ENCODE measurements at regions of chr20 and their contacts with region 1.

Region 1: DNA sequence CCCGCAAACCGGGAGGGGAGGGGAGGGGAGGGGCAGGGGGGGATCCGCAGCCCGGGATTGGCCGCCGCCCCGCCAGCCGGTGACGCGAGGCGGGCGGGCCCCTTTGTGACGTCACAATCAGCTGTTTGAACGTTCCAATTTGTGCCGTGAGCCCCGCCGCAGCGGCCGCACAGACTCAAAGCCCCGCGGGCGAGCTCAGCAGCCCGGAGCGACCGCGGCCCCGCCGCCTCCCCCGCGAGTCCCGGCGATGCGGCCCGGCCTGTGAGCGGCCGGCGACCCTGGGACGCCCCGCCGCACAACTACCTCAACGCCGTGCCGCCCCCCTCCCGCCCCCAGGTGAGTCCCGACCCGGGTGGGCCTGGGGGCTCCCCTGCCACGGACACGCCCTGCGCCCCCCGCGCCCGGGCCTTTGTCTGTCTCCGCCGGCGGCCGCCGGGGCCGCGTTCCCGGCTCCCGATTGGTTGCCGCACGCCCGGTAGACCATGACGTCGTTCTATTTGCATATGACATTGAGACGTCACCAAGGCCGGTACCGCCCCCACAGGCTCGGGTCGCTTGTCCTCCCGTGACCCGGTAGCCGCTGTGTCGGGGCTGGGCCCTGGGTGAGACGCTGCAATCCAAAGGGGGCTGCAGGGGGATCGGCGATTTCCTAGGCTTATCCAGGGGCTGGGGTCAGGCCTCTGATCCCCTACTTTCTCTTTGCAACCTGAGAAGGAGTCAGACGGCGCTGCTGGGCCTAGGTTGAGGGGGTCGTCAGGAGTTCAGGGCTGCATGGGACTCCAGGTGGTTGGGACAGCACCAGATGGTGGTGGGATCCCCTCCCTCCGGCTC is at the start of gene TP53INP2:
- DNase-seq: no peak
- ATAC-seq: peak; percentile 66
- H3K4me3 ChIP-seq: peak within 1 kb of the TSS; percentile 96
- H3K27ac ChIP-seq: peak within 1 kb of the TSS; percentile 70
- H3K4me1 ChIP-seq: peaks cover 3% of the 10 kb centered on the region; the same call in 1 of the 2 replicates
- H3K27me3 ChIP-seq: no peaks in the 10 kb centered on the region
- CTCF ChIP-seq: no peak
- EP300 ChIP-seq: no peak
- POLR2A ChIP-seq: peak; percentile 66
- RAD21 ChIP-seq: no peak
- polyA plus RNA-seq, gene TP53INP2: 2.8 to 3.7 TPM

Region 2: GRCh38 chr20:34538671-34539123 is 165.7 kb before region 1 on chr20:
- CTCF ChIA-PET with region 1: interaction called, 68 read pairs
- POLR2A ChIA-PET with region 1: no interaction called
- RAD21 ChIA-PET with region 1: interaction called, 9 read pairs
- SMC1A ChIA-PET with region 1: interaction called, 50 read pairs
- in situ Hi-C with region 1: no loop called
- intact Hi-C with region 1: loop called (anchors 1 kb)
- DNase-seq: no peak
- ATAC-seq: peak; percentile 85
- H3K4me3 ChIP-seq: no peak overlapping the region
- H3K27ac ChIP-seq: no peak overlapping the region
- H3K4me1 ChIP-seq: peaks cover 4% of the 10 kb centered on the region; the same call in 1 of the 2 replicates
- H3K27me3 ChIP-seq: no peaks in the 10 kb centered on the region
- CTCF ChIP-seq: peak; percentile 78 to 92 (median 88)
- EP300 ChIP-seq: no peak
- POLR2A ChIP-seq: no peak
- RAD21 ChIP-seq: peak; percentile 69

Region 3: GRCh38 chr20:34544109-34544793 is 160.1 kb before region 1 on chr20:
- CTCF ChIA-PET with region 1: interaction called, 68 read pairs
- POLR2A ChIA-PET with region 1: no interaction called
- RAD21 ChIA-PET with region 1: interaction called, 9 read pairs
- SMC1A ChIA-PET with region 1: interaction called, 50 read pairs
- in situ Hi-C with region 1: no loop called
- intact Hi-C with region 1: no loop called
- DNase-seq: no peak
- ATAC-seq: no peak
- H3K4me3 ChIP-seq: no peak overlapping the region
- H3K27ac ChIP-seq: no peak overlapping the region
- H3K4me1 ChIP-seq: peaks cover 4% of the 10 kb centered on the region; the same call in 1 of the 2 replicates
- H3K27me3 ChIP-seq: no peaks in the 10 kb centered on the region
- CTCF ChIP-seq: no peak
- EP300 ChIP-seq: no peak
- POLR2A ChIP-seq: no peak
- RAD21 ChIP-seq: no peak

Region 4: DNA sequence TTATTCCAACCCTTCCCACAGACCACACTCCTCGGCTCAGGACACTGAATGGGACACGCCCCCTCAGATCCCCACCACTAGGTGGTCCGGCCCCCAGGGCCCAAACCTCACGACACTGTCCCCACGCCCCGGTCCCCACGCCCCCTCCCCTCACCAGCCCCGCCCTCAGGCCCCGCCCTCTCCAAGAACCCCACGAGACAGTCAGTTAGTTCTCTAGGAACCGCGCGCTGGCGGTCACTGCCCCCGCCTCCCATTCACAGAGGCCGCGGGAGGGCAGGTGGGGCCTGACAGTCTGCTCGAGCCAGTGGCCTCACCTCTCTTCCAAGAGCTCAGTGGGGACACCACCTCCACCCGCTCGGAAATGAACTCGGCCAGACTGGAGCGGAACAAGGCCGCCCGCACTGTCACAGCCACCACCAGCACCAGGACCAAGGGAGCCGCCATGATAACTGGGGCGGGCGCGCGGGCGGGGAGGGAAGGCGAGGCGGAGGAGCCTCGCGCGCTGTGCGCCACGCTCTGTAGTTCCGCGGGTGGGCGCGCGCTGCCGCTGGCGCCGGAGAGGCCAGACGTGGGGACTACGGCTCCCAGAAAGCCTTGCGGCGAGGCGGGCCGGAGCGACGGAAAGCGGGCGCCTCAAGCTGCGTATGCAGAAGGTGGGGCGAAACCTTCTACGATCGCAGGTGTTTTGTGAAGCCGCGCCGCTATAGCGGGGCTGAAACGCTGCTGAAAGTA is 27.6 kb before region 1 on chr20 and contains the start of gene PIGU:
- CTCF ChIA-PET with region 1: interaction called, 3 read pairs
- POLR2A ChIA-PET with region 1: interaction called, 3 read pairs
- RAD21 ChIA-PET with region 1: interaction called, 12 read pairs
- SMC1A ChIA-PET with region 1: interaction called, 4 read pairs
- in situ Hi-C with region 1: no loop called
- intact Hi-C with region 1: no loop called
- DNase-seq: peak; percentile 88
- ATAC-seq: peak; percentile 98
- H3K4me3 ChIP-seq: peak within 1 kb of the TSS; percentile 95
- H3K27ac ChIP-seq: peak within 1 kb of the TSS; percentile 76
- H3K4me1 ChIP-seq: no peaks in the 10 kb centered on the region; the same call in 1 of the 2 replicates
- H3K27me3 ChIP-seq: no peaks in the 10 kb centered on the region
- CTCF ChIP-seq: peak in 1 of 3 experiments; percentile 14; a peak in 1 of 6 replicates
- EP300 ChIP-seq: no peak
- POLR2A ChIP-seq: peak; percentile 88
- RAD21 ChIP-seq: no peak
- polyA plus RNA-seq, gene PIGU: 4.1 to 6.3 TPM

Region 5: GRCh38 chr20:34720266-34720665 is 15.9 kb after region 1 on chr20:
- CTCF ChIA-PET with region 1: interaction called, 31 read pairs
- POLR2A ChIA-PET with region 1: interaction called, 14 read pairs
- RAD21 ChIA-PET with region 1: interaction called, 19 read pairs
- SMC1A ChIA-PET with region 1: interaction called, 18 read pairs
- in situ Hi-C with region 1: no loop called
- intact Hi-C with region 1: no loop called
- DNase-seq: no peak
- ATAC-seq: peak; percentile 49
- H3K4me3 ChIP-seq: no peak overlapping the region; the same call in 1 of the 2 replicates
- H3K27ac ChIP-seq: peak overlapping the region; percentile 79
- H3K4me1 ChIP-seq: peaks cover 37% of the 10 kb centered on the region
- H3K27me3 ChIP-seq: no peaks in the 10 kb centered on the region
- CTCF ChIP-seq: no peak
- EP300 ChIP-seq: no peak
- POLR2A ChIP-seq: no peak
- RAD21 ChIP-seq: no peak

Region 6: GRCh38 chr20:34747479-34747878 is 43.1 kb after region 1 on chr20:
- CTCF ChIA-PET with region 1: interaction called, 10 read pairs
- POLR2A ChIA-PET with region 1: interaction called, 3 read pairs
- RAD21 ChIA-PET with region 1: interaction called, 17 read pairs
- SMC1A ChIA-PET with region 1: interaction called, 8 read pairs
- in situ Hi-C with region 1: no loop called
- intact Hi-C with region 1: no loop called
- DNase-seq: no peak
- ATAC-seq: peak; percentile 69
- H3K4me3 ChIP-seq: 0 out of 2 replicates have a peak overlapping the region, but pooled peaks have one; percentile 8
- H3K27ac ChIP-seq: peak overlapping the region; percentile 80
- H3K4me1 ChIP-seq: peaks cover 11% of the 10 kb centered on the region
- H3K27me3 ChIP-seq: no peaks in the 10 kb centered on the region
- CTCF ChIP-seq: no peak
- EP300 ChIP-seq: no peak
- POLR2A ChIP-seq: no peak
- RAD21 ChIP-seq: no peak

Region 7: DNA sequence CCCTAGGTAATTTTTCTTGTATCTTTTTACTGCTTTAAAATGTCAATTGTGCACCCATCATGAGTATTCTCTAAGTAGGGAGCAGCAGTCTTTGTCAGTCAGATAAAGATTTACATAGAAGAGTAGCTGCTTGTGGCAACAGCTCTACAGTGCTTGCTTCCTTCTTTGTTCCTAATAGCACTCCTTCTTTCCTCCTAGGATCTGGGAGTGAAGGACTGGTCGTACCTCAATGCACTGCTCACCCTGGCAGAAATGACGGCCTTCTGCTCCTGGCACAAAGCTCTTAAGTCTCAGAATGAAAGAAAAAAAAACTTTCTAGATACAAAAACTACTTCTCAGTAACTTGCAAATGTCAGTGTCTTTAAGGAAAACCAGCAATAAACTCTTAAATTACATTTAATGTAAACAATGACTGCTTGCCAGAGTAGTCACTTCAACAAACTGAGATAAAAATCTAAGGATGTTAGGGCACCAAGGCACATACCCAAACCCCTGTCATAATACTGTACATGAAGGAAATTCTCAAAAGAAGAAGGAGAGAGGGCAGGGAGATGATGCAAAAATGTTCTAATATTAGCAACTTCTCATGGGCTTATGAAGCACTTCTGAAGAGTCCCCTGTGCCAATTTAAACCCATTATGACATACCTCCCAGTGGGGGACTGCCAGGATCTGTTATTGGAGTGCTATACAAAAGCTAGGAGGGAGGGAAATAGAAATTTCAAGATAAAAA is 87.1 kb after region 1 on chr20:
- CTCF ChIA-PET with region 1: no interaction called
- POLR2A ChIA-PET with region 1: no interaction called
- RAD21 ChIA-PET with region 1: no interaction called
- SMC1A ChIA-PET with region 1: no interaction called
- in situ Hi-C with region 1: no loop called
- intact Hi-C with region 1: no loop called
- DNase-seq: no peak
- ATAC-seq: no peak
- H3K4me3 ChIP-seq: no peak overlapping the region
- H3K27ac ChIP-seq: no peak overlapping the region
- H3K4me1 ChIP-seq: no peaks in the 10 kb centered on the region
- H3K27me3 ChIP-seq: no peaks in the 10 kb centered on the region
- CTCF ChIP-seq: no peak
- EP300 ChIP-seq: no peak
- POLR2A ChIP-seq: no peak
- RAD21 ChIP-seq: no peak

Measured in GM12878 (cell line).